Activated naive CD4-positive, alpha-beta T cell treated with anti-CD3 and anti-CD28 coated beads for 36 hours (primary cell): ENCODE measurements at regions of chr14 and their contacts with region 1.

Region 1: DNA sequence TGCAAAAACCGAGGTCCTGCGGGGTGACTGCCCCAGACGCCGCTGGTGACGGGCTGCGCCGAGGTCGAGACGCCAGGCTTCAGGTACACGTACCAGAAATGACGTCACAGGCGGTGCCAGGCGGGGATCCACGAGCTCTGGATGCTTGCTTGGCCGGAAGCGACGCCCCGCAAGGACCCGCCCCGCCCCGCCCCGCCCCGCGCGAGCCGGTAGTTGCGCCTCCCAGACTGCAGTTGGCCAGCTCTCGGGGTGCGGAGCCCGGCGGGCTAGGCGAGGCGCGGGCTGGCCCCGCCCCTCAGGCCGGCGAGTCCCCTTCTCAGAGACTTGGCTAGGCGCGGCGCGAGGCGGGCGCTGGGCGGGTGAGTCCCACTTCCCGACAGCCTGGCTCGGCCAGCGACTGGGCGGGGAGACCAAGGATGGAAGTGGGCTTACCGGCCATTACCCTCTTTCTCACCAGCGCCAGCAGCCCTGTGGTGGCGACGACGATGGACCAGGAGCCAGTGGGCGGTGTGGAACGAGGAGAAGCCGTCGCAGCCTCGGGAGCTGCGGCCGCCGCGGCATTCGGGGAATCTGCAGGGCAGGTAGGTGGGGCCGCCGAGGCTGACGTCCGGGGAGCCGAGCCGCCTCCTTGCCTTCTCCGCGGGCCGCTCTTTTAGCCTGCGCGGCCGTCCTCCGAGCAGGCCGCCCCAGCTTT is at the start of gene FAM177A1:
- DNase-seq: peak; percentile 99
- H3K4me3 Mint-ChIP-seq: peak within 1 kb of the TSS; percentile 89
- H3K27ac Mint-ChIP-seq: peak within 1 kb of the TSS; percentile 98
- H3K4me1 Mint-ChIP-seq: peaks cover 25% of the 10 kb centered on the region
- H3K27me3 Mint-ChIP-seq: no peaks in the 10 kb centered on the region
- total RNA-seq, gene FAM177A1: 55.0 to 58.5 TPM

Region 2: DNA sequence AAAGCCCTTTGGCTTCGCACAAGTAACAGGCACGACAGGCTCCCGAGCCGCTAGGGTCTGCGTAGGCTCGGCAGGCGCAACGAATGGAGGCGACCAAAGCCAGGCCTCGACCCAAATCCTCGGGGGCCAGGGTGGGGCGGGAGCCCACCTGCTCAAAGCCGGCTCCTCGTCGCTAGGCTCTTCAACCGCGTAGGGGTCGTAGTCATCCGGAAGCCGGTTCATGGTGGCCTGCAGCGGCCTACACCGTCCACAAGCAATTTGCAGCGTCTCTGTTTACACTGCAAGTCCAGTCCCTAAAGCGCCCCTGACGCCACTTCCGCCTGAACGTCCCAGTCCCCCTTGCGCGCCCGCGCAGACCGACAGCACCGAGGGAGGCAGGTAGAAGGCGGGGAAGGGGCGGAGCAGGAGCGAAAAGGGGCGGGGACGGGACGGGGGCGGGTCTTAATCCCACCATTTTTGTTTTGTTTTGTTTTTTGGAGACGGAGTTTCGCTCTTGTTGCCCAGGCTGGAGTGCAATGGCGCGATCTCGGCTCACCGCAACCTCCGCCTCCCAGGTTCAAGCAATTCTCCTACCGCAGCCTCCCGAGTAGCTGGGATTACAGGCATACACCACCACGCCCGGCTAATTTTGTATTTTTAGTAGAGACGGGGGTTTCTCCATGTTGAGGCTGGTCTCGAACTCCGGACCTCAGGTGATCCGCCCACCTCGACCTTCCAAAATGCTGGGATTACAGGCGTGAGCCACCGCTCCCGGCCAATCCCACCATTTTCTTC is 506.6 kb before region 1 on chr14 and contains the start of gene EAPP:
- CTCF ChIA-PET with region 1: no interaction called
- intact Hi-C with region 1: loop called (anchors 5 kb)
- DNase-seq: peak; percentile 98
- H3K4me3 Mint-ChIP-seq: peak within 1 kb of the TSS; percentile 95
- H3K27ac Mint-ChIP-seq: peak within 1 kb of the TSS; percentile 98
- H3K4me1 Mint-ChIP-seq: peaks cover 32% of the 10 kb centered on the region
- H3K27me3 Mint-ChIP-seq: no peaks in the 10 kb centered on the region
- total RNA-seq, gene EAPP: 34.0 to 35.4 TPM

Region 3: DNA sequence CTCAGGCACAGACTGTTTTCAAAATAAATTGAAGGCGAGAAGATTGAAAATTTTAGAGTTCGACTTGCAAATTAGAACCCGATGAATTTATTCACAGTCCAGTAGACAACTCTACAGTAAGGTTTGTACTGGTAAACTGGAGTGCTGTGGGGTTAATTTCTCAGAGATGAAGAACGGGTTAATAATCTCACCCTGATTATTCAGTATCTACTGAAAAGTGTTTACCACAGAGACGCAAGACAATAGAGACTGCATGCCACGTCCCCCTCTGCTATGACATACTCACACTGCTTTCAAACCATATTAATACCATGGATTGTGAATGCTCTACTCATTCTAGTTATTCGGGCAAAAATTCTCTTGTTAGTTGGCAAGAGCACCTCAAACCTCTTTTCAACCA is 367.9 kb before region 1 on chr14:
- CTCF ChIA-PET with region 1: no interaction called
- intact Hi-C with region 1: loop called (anchors 10 kb)
- DNase-seq: no peak
- H3K4me3 Mint-ChIP-seq: no peak overlapping the region
- H3K27ac Mint-ChIP-seq: no peak overlapping the region
- H3K4me1 Mint-ChIP-seq: peaks cover 6% of the 10 kb centered on the region
- H3K27me3 Mint-ChIP-seq: no peaks in the 10 kb centered on the region

Region 4: DNA sequence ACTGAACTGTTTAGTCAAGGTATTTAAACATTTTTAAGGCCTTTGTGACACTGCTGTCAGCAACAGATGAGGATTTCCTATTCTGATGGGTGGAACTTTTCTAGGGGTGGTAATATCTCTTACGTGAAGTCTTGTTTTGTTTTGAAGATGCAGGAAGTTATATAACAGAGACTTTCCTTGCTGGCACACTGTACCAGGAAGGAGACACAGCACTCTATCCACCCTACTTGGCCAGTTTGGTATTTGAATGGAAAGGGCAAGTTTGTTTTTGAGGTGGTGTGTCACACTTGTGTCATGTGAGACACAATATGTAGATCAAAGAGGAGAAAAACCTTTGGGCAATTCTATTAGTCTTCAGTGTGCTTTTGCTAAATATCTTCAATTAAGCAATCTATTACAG is 115.0 kb before region 1 on chr14:
- CTCF ChIA-PET with region 1: no interaction called
- intact Hi-C with region 1: loop called (anchors 1 kb)
- DNase-seq: peak; percentile 56
- H3K4me3 Mint-ChIP-seq: peak overlapping the region; percentile 64
- H3K27ac Mint-ChIP-seq: peak overlapping the region; percentile 93
- H3K4me1 Mint-ChIP-seq: peaks cover 49% of the 10 kb centered on the region
- H3K27me3 Mint-ChIP-seq: no peaks in the 10 kb centered on the region

Region 5: GRCh38 chr14:35285168-35286002 is 239.2 kb after region 1 on chr14:
- CTCF ChIA-PET with region 1: interaction called, 3 read pairs
- intact Hi-C with region 1: loop called (anchors 2 kb)
- DNase-seq: peak; percentile 47
- H3K4me3 Mint-ChIP-seq: peak overlapping the region; percentile 35
- H3K27ac Mint-ChIP-seq: peak overlapping the region; percentile 96
- H3K4me1 Mint-ChIP-seq: peaks cover 55% of the 10 kb centered on the region
- H3K27me3 Mint-ChIP-seq: no peaks in the 10 kb centered on the region

Region 6: DNA sequence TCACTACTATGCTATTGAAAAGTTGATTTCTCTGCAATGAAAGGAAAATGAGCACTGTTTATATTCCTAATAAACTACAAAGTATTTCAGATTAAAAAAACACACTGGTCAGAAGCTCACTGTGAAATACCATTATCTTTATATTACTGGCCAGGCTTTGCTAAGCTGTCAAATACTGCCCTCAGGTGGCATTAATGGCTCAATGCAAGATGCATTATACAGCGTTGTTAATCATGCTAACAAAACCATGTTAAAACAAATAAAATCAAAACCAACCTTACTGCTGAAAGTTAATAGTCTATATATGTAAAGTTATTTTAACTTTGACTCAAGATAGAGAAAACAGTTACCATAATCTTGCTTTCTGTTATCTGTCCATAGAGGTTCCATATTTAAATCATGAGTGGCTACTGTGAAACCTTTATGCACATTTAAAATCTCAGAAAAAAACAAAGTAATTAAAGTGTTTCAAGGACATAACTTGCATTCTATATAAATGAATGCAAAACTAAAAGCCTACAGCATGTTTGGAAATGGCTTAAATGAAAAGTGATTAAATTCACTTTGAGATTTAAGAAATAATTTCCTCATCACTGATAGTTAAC is 641.2 kb after region 1 on chr14:
- CTCF ChIA-PET with region 1: no interaction called
- intact Hi-C with region 1: loop called (anchors 5 kb)
- DNase-seq: peak; percentile 63
- H3K4me3 Mint-ChIP-seq: no peak overlapping the region
- H3K27ac Mint-ChIP-seq: no peak overlapping the region
- H3K4me1 Mint-ChIP-seq: peaks cover 16% of the 10 kb centered on the region
- H3K27me3 Mint-ChIP-seq: no peaks in the 10 kb centered on the region